Posterior cingulate gyrus (tissue), 11 donors: ENCODE measurements at regions of chr12 and their contacts with region 1.

Region 1: DNA sequence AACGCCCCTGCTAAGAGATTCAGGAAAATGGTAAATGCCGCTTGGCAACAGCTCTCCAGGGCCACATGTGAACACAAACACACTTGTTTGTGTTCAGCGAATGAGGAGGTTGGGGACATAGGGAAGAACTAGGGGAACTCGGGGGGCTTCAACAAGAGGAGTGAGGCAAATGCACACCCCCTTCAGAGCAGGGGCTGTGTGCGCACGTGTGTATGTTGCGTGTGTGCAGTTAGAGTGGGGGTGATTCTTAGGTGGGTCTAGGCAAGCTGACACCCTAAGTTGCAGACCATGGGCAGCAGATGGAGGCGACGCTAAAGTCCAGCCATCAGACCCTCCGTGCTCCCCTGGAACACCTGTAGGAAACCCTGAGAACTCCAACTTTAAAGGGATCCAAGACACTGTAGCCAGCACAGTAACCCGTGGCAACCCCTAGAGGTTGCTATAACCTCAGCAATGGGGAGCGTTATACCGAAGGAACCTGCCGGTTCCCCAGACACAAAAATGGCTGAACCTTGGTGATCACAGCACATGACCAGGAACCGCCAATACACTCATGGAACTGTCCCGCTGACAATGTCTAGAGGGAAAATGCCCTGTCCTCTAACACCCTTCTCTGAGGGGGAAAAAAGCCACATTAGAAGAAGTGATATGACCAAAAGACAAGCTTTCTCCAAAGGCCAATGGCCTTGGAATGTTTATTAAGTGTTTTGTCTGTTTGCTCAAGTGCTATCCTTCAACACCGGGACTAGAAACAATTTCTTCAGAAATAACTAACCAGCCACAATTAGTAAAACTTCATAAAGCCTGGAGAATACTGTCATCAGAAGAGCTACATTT is 86.5 kb upstream of the CEP83 start:
- DNase-seq: peak in 5 of 10 donors; percentile 23 to 88 (median 50)

Region 2: GRCh38 chr12:94753036-94753679 is 207.0 kb after region 1 on chr12:
- intact Hi-C with region 1: loop called (anchors 2 kb)
- DNase-seq: peak in 4 of 10 donors; percentile 21 to 78 (median 28)

Region 3: DNA sequence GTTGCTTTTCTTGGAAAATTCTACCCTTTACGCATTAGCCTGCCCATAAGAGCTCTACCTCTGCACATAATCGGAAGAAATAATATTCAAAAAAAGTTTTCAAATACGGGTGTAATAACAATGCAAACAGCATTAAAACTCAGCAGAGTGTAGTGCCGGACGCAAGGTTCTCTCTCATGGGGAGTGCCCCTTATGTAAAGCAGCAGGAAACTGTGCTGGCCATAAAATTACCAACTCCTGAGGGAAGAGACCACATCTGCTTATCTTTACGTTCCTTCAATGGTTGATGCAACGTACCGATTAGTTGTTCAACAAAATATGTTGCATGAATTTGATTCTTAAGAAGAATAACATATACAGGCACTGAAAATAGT is 222.9 kb after region 1 on chr12:
- intact Hi-C with region 1: loop called (anchors 5 kb)
- DNase-seq: no peak

Region 4: GRCh38 chr12:95003213-95003920 is 457.2 kb after region 1 on chr12 and contains the start of gene NDUFA12:
- intact Hi-C with region 1: no loop called
- DNase-seq: peak; percentile 92 to 99 (median 96)